A549 (cell line): ENCODE measurements at regions of chr1 and their contacts with region 1.

Region 1: DNA sequence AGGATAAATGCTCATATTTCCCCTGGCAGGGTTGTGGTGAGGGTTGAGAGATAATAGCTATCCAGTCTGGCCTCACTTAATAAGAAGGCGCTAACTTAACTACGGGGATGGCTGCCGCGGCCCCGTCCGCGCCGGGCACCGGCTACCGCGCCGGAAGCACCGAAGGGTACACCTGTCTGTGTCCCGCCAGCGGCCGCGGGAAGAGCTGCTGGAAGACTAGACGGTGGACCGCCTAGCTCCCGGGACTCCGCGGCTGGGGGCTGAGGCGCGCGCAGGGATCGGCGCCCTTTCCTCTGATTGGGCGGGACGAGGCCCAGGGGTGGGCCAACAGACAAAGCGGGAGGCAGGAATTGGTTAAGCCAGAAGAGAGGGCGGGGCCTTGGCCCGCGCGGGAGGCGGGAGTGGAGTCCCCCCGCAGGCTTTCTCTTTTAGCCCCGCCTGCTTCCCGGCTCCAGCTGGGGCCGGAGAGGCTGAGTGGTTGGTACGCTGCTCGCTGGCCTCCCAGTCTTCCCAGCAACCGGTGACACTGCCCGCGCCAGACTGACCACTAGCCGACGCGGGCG is at the start of gene ZNF672:
- DNase-seq: peak; percentile 90 to 97
- ATAC-seq: peak; percentile 90 to 95
- H3K4me3 ChIP-seq: peak within 1 kb of the TSS; percentile 88
- H3K27ac ChIP-seq: peak within 1 kb of the TSS; percentile 94 to 95
- H3K4me1 ChIP-seq: peaks cover 10% of the 10 kb centered on the region; the same call in 2 of the 3 replicates
- CTCF ChIP-seq: no peak
- EP300 ChIP-seq: no peak
- POLR2A ChIP-seq: peak; percentile 87
- RAD21 ChIP-seq: no peak
- polyA plus RNA-seq, gene ZNF672: 20.4 and 20.6 TPM in 2 replicates

Region 2: DNA sequence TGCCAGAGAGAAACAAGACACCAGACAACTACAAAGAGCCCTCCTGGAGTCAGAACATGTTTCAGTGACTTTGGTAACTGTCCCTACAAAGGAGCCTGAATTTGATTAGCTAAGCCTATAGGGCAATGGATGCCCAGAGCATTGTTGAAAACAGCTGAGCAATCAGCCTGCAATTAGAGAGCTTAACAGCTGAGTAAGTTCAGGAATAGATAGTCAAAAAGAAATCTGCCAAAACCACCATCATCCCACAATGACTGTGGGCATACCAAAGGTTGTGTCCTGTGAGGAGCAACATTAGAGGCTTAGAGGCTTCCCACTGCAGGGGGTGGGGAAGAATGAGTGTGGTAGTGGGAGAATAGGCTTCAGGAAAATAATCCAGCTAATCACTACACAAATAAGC is 44.3 kb before region 1 on chr1:
- CTCF ChIA-PET with region 1: no interaction called
- POLR2A ChIA-PET with region 1: no interaction called
- DNase-seq: no peak
- ATAC-seq: no peak
- H3K4me3 ChIP-seq: no peak overlapping the region
- H3K27ac ChIP-seq: no peak overlapping the region
- H3K4me1 ChIP-seq: no peaks in the 10 kb centered on the region
- CTCF ChIP-seq: no peak
- EP300 ChIP-seq: no peak
- POLR2A ChIP-seq: no peak
- RAD21 ChIP-seq: no peak

Region 3: GRCh38 chr1:248825909-248826760 is 11.7 kb before region 1 on chr1 and contains the start of gene SH3BP5L:
- CTCF ChIA-PET with region 1: interaction called, 48 read pairs
- POLR2A ChIA-PET with region 1: interaction called, 60 read pairs
- DNase-seq: peak; percentile 97 to 98
- ATAC-seq: peak; percentile 91 to 96
- H3K4me3 ChIP-seq: peak within 1 kb of the TSS; percentile 84
- H3K27ac ChIP-seq: peak within 1 kb of the TSS; percentile 96 to 97
- H3K4me1 ChIP-seq: peaks cover 59% of the 10 kb centered on the region
- CTCF ChIP-seq: peak; percentile 76
- EP300 ChIP-seq: no peak
- POLR2A ChIP-seq: peak; percentile 46
- RAD21 ChIP-seq: peak; percentile 44 to 48; a peak in 4 of 5 replicates
- polyA plus RNA-seq, gene SH3BP5L: 10.9 and 12.1 TPM in 2 replicates

Region 4: GRCh38 chr1:248853663-248854375 is 15.9 kb after region 1 on chr1:
- CTCF ChIA-PET with region 1: interaction called, 46 read pairs
- POLR2A ChIA-PET with region 1: interaction called, 53 read pairs
- DNase-seq: no peak
- ATAC-seq: no peak
- H3K4me3 ChIP-seq: no peak overlapping the region
- H3K27ac ChIP-seq: no peak overlapping the region
- H3K4me1 ChIP-seq: peaks cover 10% of the 10 kb centered on the region; the same call in 2 of the 3 replicates
- CTCF ChIP-seq: no peak
- EP300 ChIP-seq: no peak
- POLR2A ChIP-seq: no peak
- RAD21 ChIP-seq: no peak